ENCODE measurements at regions of chr18 and their contacts with region 1.

Region 1: GRCh38 chr18:45275367-45276113 is 339.7 kb upstream of the SLC14A2 start:
- DNase-seq: no peak
- H3K4me3 Mint-ChIP-seq: no peak overlapping the region
- H3K27ac Mint-ChIP-seq: no peak overlapping the region
- H3K4me1 Mint-ChIP-seq: no peaks in the 10 kb centered on the region
- H3K27me3 Mint-ChIP-seq: peaks cover 2% of the 10 kb centered on the region

Region 2: DNA sequence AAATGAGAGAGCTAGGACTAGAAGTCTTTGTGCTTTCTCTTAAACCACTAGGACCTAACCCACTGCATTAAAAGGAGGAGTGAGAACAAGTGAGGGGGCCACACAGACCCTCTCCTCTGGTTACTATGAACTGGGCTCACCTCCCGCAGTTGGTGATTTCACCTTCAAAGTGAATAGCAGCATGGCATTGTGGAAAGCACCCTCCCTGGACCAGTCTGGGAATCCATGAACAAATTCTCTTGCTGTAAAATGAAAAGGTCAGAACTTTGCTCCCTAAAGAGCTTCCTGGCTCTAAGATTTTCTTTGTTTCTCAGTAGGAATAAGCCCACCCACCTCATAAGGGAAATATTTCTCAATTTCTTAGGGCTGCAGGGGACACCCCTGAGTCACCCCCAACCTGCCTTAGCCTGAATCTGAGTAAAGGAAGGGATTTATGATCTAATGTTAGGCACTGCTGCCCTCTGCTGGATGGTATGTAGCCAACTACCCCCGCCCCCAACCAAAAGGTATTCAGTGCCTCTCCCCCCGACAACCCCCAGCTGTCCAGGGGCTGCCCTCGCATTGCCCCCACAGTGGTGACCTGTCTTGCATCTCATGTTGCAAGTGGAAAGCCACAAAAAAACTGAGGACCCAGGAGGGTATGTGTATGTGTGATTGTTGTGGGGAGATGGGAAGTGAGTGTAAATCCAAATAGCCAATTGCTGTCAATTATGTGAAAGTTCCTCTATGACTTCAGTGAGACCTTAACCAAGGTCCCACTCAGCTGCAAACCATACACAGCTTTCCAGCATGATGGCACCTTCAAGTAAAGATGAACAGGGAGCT is 108.8 kb after region 1 on chr18:
- CTCF ChIA-PET with region 1: interaction called, 11 read pairs
- intact Hi-C with region 1: loop called (anchors 1 kb)
- DNase-seq: peak; percentile 59
- H3K4me3 Mint-ChIP-seq: no peak overlapping the region
- H3K27ac Mint-ChIP-seq: no peak overlapping the region
- H3K4me1 Mint-ChIP-seq: no peaks in the 10 kb centered on the region
- H3K27me3 Mint-ChIP-seq: peaks cover 23% of the 10 kb centered on the region